CD4-positive, alpha-beta memory T cell (primary cell): ENCODE measurements at regions of chr7 and their contacts with region 1.

Region 1: GRCh38 chr7:39948956-39949928 is 814 bp upstream of the CDK13 start:
- DNase-seq: peak; percentile 98 to 100 (median 99)
- H3K4me3 ChIP-seq: peak overlapping the region; percentile 67 to 73
- H3K4me3 Mint-ChIP-seq: peak overlapping the region; percentile 96 to 99 (median 98)
- H3K27ac ChIP-seq: peak overlapping the region; percentile 94
- H3K27ac Mint-ChIP-seq: peak overlapping the region; percentile 99 to 100 (median 100)
- H3K4me1 ChIP-seq: peaks cover 32% of the 10 kb centered on the region
- H3K4me1 Mint-ChIP-seq: peaks cover 21 to 47% (median 31%) of the 10 kb centered on the region in 4 donors
- H3K27me3 ChIP-seq: no peaks in the 10 kb centered on the region
- H3K27me3 Mint-ChIP-seq: peaks cover 0 to 5% of the 10 kb centered on the region in 2 donors

Region 2: GRCh38 chr7:39566023-39566921 is 383.0 kb before region 1 on chr7 and contains the start of gene YAE1:
- CTCF ChIA-PET with region 1: no interaction called
- POLR2A ChIA-PET with region 1: no interaction called
- intact Hi-C with region 1: loop called (anchors 1 kb)
- DNase-seq: peak; percentile 71 to 75 (median 72)
- H3K4me3 ChIP-seq: peak within 1 kb of the TSS; percentile 83 to 86
- H3K4me3 Mint-ChIP-seq: peak within 1 kb of the TSS; percentile 98 to 100 (median 100)
- H3K27ac ChIP-seq: peak within 1 kb of the TSS; percentile 62
- H3K27ac Mint-ChIP-seq: peak within 1 kb of the TSS; percentile 87 to 99 (median 98)
- H3K4me1 ChIP-seq: peaks cover 19% of the 10 kb centered on the region
- H3K4me1 Mint-ChIP-seq: peaks cover 19 to 29% (median 24%) of the 10 kb centered on the region in 4 donors
- H3K27me3 ChIP-seq: no peaks in the 10 kb centered on the region
- H3K27me3 Mint-ChIP-seq: peaks cover 0 to 1% of the 10 kb centered on the region in 2 donors
- total RNA-seq, gene YAE1: 23.4 to 27.5 TPM

Region 3: GRCh38 chr7:39845006-39845405 is 104.2 kb before region 1 on chr7:
- CTCF ChIA-PET with region 1: no interaction called
- POLR2A ChIA-PET with region 1: no interaction called
- intact Hi-C with region 1: no loop called
- DNase-seq: no peak
- H3K4me3 ChIP-seq: no peak overlapping the region
- H3K4me3 Mint-ChIP-seq: no peak overlapping the region
- H3K27ac ChIP-seq: no peak overlapping the region
- H3K27ac Mint-ChIP-seq: no peak overlapping the region
- H3K4me1 ChIP-seq: no peaks in the 10 kb centered on the region
- H3K4me1 Mint-ChIP-seq: no peaks in the 10 kb centered on the region
- H3K27me3 ChIP-seq: no peaks in the 10 kb centered on the region
- H3K27me3 Mint-ChIP-seq: peaks cover 4 to 24% of the 10 kb centered on the region in 2 donors

Region 4: DNA sequence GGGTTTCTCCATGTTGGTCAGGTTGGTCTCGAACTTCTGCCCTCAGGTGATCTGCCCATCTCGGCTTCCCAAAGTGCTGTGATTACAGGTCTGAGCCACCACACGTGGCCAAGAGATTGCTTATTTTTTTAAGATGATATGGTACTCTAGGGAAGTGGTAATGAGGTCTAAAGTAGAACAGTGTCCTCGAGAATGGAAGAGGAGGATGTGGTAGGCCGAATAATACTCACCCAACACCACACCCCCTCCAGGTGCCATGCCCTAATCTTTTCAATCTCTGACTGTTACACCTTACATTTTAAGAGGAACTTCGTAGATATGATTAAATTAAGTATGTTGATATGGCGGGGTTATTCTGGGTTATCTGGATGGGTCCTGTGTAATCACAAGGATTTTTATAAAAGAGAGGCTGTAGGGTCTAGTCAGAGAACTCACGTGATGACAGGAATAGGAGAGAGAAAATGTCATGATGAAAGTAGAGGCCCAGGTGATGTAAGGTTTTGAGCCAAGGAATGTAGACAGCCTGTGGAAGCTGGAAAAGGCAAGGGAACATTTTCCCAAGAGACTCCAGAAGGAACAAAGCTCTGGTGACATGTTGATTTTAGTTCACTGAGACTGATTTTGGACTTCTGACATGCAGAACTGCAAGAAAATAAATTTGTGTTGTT is 30.3 kb after region 1 on chr7:
- CTCF ChIA-PET with region 1: interaction called, 9 read pairs
- POLR2A ChIA-PET with region 1: interaction called, 12 read pairs
- intact Hi-C with region 1: no loop called
- DNase-seq: peak; percentile 65 to 79 (median 75)
- H3K4me3 ChIP-seq: no peak overlapping the region
- H3K4me3 Mint-ChIP-seq: no peak overlapping the region
- H3K27ac ChIP-seq: no peak overlapping the region
- H3K27ac Mint-ChIP-seq: no peak overlapping the region
- H3K4me1 ChIP-seq: peaks cover 74% of the 10 kb centered on the region
- H3K4me1 Mint-ChIP-seq: peaks cover 15 to 21% (median 18%) of the 10 kb centered on the region in 4 donors
- H3K27me3 ChIP-seq: no peaks in the 10 kb centered on the region
- H3K27me3 Mint-ChIP-seq: no peaks in the 10 kb centered on the region

Region 5: GRCh38 chr7:40047661-40048060 is 98.4 kb after region 1 on chr7:
- CTCF ChIA-PET with region 1: interaction called, 44 read pairs
- POLR2A ChIA-PET with region 1: interaction called, 46 read pairs
- intact Hi-C with region 1: loop called (anchors 1 kb)
- DNase-seq: no peak
- H3K4me3 ChIP-seq: no peak overlapping the region
- H3K4me3 Mint-ChIP-seq: no peak overlapping the region
- H3K27ac ChIP-seq: no peak overlapping the region
- H3K27ac Mint-ChIP-seq: peak overlapping the region in 1 of 7 donors; percentile 36
- H3K4me1 ChIP-seq: no peaks in the 10 kb centered on the region
- H3K4me1 Mint-ChIP-seq: peaks cover 0 to 10% (median 6%) of the 10 kb centered on the region in 4 donors
- H3K27me3 ChIP-seq: no peaks in the 10 kb centered on the region
- H3K27me3 Mint-ChIP-seq: no peaks in the 10 kb centered on the region

Region 6: GRCh38 chr7:40134428-40135316 is 185.4 kb after region 1 on chr7 and contains the starts of genes MPLKIP and SUGCT:
- CTCF ChIA-PET with region 1: interaction called, 4 read pairs
- POLR2A ChIA-PET with region 1: interaction called, 54 read pairs
- intact Hi-C with region 1: loop called (anchors 1 kb)
- DNase-seq: peak; percentile 87 to 93 (median 90)
- H3K4me3 ChIP-seq: peak within 1 kb of the TSS; percentile 98 to 99
- H3K4me3 Mint-ChIP-seq: peak within 1 kb of the TSS; percentile 93 to 100 (median 98)
- H3K27ac ChIP-seq: peak within 1 kb of the TSS; percentile 87
- H3K27ac Mint-ChIP-seq: peak within 1 kb of the TSS; percentile 94 to 100 (median 98)
- H3K4me1 ChIP-seq: peaks cover 38% of the 10 kb centered on the region
- H3K4me1 Mint-ChIP-seq: peaks cover 15 to 49% (median 27%) of the 10 kb centered on the region in 4 donors
- H3K27me3 ChIP-seq: no peaks in the 10 kb centered on the region
- H3K27me3 Mint-ChIP-seq: peaks cover 0 to 4% of the 10 kb centered on the region in 2 donors
- total RNA-seq, gene MPLKIP: 34.3 to 34.8 TPM
- total RNA-seq, gene SUGCT: 1.7 to 4.4 TPM